Heart left ventricle (tissue), 16 donors: ENCODE measurements at regions of chr19 and their contacts with region 1.

Region 1: DNA sequence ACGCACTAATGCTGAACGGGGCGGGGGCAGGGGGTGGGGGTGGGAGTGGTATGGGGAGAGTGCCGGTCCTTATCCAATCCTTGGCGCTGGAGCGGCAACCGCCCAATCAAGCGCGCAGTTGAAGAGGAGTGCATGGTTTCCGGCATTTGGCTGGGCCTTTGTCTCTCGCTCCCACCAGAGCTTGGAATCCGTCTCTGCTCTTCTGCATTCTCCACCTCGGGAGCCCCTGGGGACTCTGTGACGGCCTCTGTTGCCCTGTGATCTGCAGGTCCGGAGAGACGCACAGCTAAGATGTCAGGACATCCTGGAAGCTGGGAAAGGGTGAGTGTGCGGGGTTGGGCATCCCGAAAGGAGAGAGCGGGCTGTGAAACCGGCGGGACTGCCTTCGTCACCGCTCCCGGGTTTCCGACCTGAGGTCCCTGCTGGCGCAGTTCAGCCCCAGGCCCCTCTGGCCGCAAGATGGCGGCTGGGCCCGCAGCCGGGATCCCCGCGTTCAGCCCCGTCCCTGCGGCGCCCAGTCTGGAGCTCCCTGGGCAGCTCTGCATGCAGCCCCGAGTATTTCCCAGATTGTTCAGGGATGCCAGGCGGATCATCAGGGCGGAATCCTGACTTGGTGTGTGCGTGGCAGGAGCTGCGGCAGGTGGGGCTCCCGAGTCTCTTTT is 53.6 kb upstream of the ZNF254 start:
- DNase-seq: peak; percentile 88 to 94 (median 93)
- ATAC-seq: peak; percentile 98 to 99 (median 99)
- H3K4me3 ChIP-seq: peak overlapping the region; percentile 64 to 96 (median 86)
- H3K27ac ChIP-seq: peak overlapping the region; percentile 62 to 95 (median 92)
- H3K4me1 ChIP-seq: peaks cover 0 to 33% (median 18%) of the 10 kb centered on the region in 12 donors
- H3K27me3 ChIP-seq: no peaks in the 10 kb centered on the region
- CTCF ChIP-seq: peak in 4 of 12 donors; percentile 5 to 29 (median 18)
- POLR2A ChIP-seq: peak in 1 of 2 donors; percentile 64

Region 2: GRCh38 chr19:23395041-23395721 is 638.3 kb before region 1 on chr19 and contains the start of gene ZNF91:
- intact Hi-C with region 1: loop called in 1 of 10 experiments (anchors 10 kb)
- DNase-seq: peak; percentile 95 to 99 (median 97)
- ATAC-seq: peak; percentile 98 to 99 (median 98)
- H3K4me3 ChIP-seq: peak within 1 kb of the TSS; percentile 70 to 92 (median 88)
- H3K27ac ChIP-seq: peak within 1 kb of the TSS; percentile 86 to 97 (median 94)
- H3K4me1 ChIP-seq: peaks cover 3 to 43% (median 31%) of the 10 kb centered on the region in 12 donors
- H3K27me3 ChIP-seq: no peaks in the 10 kb centered on the region
- CTCF ChIP-seq: no peak
- POLR2A ChIP-seq: peak; percentile 42 to 92
- total RNA-seq, gene ZNF91: 98.8 to 302 (median 147) TPM

Region 3: GRCh38 chr19:23686621-23687423 is 346.6 kb before region 1 on chr19 and contains the start of gene ZNF675:
- intact Hi-C with region 1: loop called in 1 of 10 experiments (anchors 10 kb)
- DNase-seq: peak; percentile 93 to 97 (median 96)
- ATAC-seq: peak; percentile 96 to 98 (median 98)
- H3K4me3 ChIP-seq: peak within 1 kb of the TSS; percentile 48 to 99 (median 76)
- H3K27ac ChIP-seq: peak within 1 kb of the TSS; percentile 23 to 89 (median 84)
- H3K4me1 ChIP-seq: peaks cover 0 to 20% (median 9%) of the 10 kb centered on the region in 12 donors
- H3K27me3 ChIP-seq: no peaks in the 10 kb centered on the region
- CTCF ChIP-seq: peak in 1 of 12 donors; percentile 30
- POLR2A ChIP-seq: peak in 1 of 2 donors; percentile 17
- total RNA-seq, gene ZNF675: 2.1 to 6.4 (median 3.1) TPM

Region 4: DNA sequence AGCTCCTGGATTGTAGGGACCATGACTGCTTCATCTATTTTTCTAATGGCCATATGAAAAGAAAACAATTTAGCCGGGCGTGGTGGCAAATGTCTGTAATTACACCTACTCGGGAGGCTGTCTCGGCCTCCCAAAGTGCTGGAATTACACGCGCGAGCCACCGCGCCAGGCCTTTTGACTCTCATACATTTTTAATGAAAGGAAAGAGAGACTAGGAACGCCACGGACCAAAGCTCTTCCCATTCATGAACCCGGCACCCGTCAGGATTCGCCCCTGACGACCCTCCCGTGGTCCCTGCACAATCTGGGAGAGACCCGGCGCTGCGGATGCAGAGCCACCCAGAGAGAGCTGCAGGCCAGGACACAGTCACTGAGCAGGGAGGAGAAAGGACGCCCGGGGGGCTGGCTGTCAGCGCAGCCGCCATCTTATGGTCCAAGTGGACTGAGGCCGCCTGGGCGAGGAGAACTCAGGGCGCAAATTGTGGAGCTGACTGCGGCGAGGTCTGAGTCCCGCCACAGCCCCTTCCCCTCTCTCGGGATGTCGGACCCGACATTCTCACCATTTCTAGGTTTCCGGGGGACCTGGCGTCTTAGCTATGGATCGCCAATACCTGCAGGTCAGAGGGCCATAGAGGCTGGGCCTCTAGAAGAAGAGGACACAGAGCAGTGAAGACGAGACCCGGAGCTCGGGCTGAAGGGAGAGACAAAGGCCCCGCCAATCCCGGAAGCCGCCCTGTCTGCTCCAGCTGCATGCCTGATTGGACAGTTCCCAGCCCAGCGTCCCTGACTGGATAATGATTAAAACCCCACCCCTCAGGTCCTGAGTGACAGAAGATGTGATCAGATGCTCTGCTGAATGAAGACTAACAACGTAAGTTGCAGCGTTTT is 275.0 kb before region 1 on chr19 and contains the start of gene ZNF681:
- intact Hi-C with region 1: loop called in 1 of 10 experiments (anchors 5 kb)
- DNase-seq: peak; percentile 88 to 94 (median 92)
- ATAC-seq: peak; percentile 95 to 97 (median 97)
- H3K4me3 ChIP-seq: peak within 1 kb of the TSS; percentile 48 to 94 (median 76)
- H3K27ac ChIP-seq: peak within 1 kb of the TSS in 11 of 12 donors; percentile 31 to 79 (median 65)
- H3K4me1 ChIP-seq: peaks cover 0 to 20% (median 3%) of the 10 kb centered on the region in 12 donors
- H3K27me3 ChIP-seq: no peaks in the 10 kb centered on the region
- CTCF ChIP-seq: peak in 3 of 12 donors; percentile 3 to 34 (median 33)
- POLR2A ChIP-seq: peak in 1 of 2 donors; percentile 53
- total RNA-seq, gene ZNF681: 0.28 to 1.6 (median 0.65) TPM

Region 5: DNA sequence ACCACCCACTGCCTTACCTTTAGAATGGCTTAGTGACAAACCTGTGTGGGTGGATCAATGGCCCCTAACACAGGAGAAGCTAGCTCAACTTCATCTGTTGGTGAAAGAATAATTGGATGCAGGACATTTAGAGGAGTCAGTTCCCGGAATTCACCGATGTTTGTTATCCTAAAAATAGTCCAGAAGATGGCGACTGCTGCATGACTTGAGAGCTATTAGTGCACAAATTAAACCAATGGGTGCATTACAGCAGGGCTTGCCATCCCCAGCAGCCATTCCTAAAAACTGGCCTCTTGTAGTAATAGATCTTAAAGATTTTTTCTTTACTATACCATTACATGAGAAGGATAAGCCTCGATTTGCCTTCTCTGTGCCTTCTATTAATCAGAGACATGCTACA is 165.5 kb before region 1 on chr19:
- intact Hi-C with region 1: no loop called
- DNase-seq: no peak
- ATAC-seq: no peak
- H3K4me3 ChIP-seq: no peak overlapping the region
- H3K27ac ChIP-seq: no peak overlapping the region
- H3K4me1 ChIP-seq: no peaks in the 10 kb centered on the region
- H3K27me3 ChIP-seq: no peaks in the 10 kb centered on the region
- CTCF ChIP-seq: no peak
- POLR2A ChIP-seq: no peak

Region 6: DNA sequence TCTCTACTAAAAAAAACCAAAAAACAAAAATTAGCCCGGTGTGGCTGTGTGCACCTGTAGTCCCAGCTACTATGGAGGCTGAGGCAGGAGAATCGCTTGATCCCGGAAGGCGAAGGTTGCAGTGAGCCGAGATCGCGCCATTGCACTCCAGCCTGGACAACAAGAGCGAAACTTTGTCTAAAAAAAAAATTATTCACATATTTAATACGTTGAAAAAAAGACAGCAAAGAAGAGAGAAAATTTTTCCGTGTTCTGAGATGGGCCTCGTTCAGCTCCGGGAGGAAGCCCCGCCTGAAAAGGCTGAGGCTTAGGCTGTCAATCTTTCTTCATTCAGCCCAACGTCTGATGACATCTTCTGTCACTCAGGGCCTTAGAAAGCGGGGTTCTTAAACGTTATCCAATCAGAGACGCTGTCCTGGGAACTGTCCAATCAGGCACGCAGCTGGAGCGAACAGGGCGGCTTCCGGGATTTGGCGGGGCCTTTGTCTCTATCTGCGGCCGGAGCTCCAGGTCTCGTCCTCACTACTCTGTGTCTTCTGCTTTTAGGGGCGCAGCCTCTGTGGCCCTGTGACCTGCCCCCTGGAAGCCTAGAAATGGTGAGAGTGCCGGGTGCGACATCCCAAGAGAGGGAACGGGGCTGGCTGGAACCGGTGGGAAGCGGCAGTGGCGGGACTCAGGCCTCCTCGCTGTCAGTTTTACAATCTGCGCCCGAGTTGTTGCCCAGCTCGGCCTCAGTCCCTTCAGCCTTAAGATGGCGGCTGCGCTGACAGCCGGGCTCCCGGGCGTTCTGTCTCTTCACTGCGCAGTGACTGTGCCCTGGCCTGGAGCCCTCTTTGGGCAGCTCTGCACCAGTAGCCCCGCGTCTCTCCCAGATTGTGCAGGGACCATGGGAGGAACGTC is 118.8 kb before region 1 on chr19 and contains the start of gene ZNF726:
- intact Hi-C with region 1: loop called in 1 of 10 experiments (anchors 10 kb)
- DNase-seq: peak; percentile 84 to 91 (median 88)
- ATAC-seq: peak; percentile 96 to 99 (median 98)
- H3K4me3 ChIP-seq: peak within 1 kb of the TSS; percentile 44 to 86 (median 68)
- H3K27ac ChIP-seq: peak within 1 kb of the TSS in 4 of 12 donors; percentile 8 to 53 (median 23)
- H3K4me1 ChIP-seq: peaks cover 0 to 12% (median 0%) of the 10 kb centered on the region in 12 donors
- H3K27me3 ChIP-seq: no peaks in the 10 kb centered on the region
- CTCF ChIP-seq: no peak
- POLR2A ChIP-seq: no peak
- total RNA-seq, gene ZNF726: 0.44 to 1.5 (median 0.63) TPM in 7 of 9 donors, not detected in the others

Region 7: GRCh38 chr19:24073817-24074216 is 40.4 kb after region 1 on chr19:
- intact Hi-C with region 1: no loop called
- DNase-seq: no peak
- ATAC-seq: no peak
- H3K4me3 ChIP-seq: no peak overlapping the region
- H3K27ac ChIP-seq: no peak overlapping the region
- H3K4me1 ChIP-seq: no peaks in the 10 kb centered on the region
- H3K27me3 ChIP-seq: no peaks in the 10 kb centered on the region
- CTCF ChIP-seq: no peak
- POLR2A ChIP-seq: no peak

Region 8: DNA sequence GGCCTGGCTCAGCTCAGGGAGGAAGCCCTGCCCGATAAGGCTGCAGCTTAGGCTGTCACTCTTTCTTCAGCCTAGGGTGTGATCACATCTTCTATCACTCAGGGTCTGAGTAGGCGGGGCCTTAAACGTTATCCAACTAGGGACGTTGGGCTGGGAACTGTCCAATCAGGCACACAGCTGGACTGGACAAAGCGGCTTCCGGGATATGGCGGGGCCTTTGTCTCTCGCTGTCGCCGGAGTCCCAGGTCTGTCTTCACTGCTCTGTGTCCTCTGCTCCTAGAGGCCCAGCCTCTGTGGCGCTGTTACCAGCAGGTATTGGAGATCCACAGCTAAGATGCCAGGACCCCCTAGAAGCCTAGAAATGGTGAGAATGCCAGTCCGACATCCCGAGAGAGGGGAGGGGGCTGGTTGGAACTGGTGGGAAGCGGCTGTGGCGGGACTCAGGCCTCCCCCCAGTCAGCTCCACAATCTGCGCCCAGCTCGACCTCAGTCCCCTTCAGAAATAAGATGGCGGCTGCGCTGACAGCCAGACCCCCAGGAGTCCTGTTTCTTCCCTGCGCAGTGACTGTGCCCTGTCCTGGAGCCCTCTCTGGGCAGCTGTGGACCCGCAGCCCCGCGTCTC is 53.7 kb after region 1 on chr19 and contains the start of gene ZNF254:
- intact Hi-C with region 1: loop called in 3 of 10 experiments (anchors 1 to 10 kb)
- DNase-seq: peak; percentile 90 to 96 (median 94)
- ATAC-seq: peak; percentile 99 to 100 (median 99)
- H3K4me3 ChIP-seq: peak within 1 kb of the TSS; percentile 57 to 96 (median 82)
- H3K27ac ChIP-seq: peak within 1 kb of the TSS; percentile 56 to 93 (median 86)
- H3K4me1 ChIP-seq: peaks cover 0 to 17% (median 10%) of the 10 kb centered on the region in 12 donors
- H3K27me3 ChIP-seq: no peaks in the 10 kb centered on the region
- CTCF ChIP-seq: peak in 1 of 12 donors; percentile 8
- POLR2A ChIP-seq: peak in 1 of 2 donors; percentile 76
- total RNA-seq, gene ZNF254: 7.4 to 15.8 (median 9.9) TPM